ENCODE measurements at regions of chr12 and their contacts with region 1.

Region 1: GRCh38 chr12:117134059-117134458 is 34.8 kb upstream of the TESC start:
- DNase-seq: peak; percentile 81
- H3K4me3 Mint-ChIP-seq: peak overlapping the region; percentile 13
- H3K27ac Mint-ChIP-seq: peak overlapping the region; percentile 80
- H3K4me1 Mint-ChIP-seq: peaks cover 16% of the 10 kb centered on the region
- H3K27me3 Mint-ChIP-seq: no peaks in the 10 kb centered on the region

Region 2: GRCh38 chr12:116703214-116703795 is 430.8 kb before region 1 on chr12:
- CTCF ChIA-PET with region 1: interaction called, 4 read pairs
- intact Hi-C with region 1: loop called (anchors 5 kb)
- DNase-seq: peak; percentile 78
- H3K4me3 Mint-ChIP-seq: no peak overlapping the region
- H3K27ac Mint-ChIP-seq: no peak overlapping the region
- H3K4me1 Mint-ChIP-seq: peaks cover 2% of the 10 kb centered on the region
- H3K27me3 Mint-ChIP-seq: peaks cover 2% of the 10 kb centered on the region

Region 3: DNA sequence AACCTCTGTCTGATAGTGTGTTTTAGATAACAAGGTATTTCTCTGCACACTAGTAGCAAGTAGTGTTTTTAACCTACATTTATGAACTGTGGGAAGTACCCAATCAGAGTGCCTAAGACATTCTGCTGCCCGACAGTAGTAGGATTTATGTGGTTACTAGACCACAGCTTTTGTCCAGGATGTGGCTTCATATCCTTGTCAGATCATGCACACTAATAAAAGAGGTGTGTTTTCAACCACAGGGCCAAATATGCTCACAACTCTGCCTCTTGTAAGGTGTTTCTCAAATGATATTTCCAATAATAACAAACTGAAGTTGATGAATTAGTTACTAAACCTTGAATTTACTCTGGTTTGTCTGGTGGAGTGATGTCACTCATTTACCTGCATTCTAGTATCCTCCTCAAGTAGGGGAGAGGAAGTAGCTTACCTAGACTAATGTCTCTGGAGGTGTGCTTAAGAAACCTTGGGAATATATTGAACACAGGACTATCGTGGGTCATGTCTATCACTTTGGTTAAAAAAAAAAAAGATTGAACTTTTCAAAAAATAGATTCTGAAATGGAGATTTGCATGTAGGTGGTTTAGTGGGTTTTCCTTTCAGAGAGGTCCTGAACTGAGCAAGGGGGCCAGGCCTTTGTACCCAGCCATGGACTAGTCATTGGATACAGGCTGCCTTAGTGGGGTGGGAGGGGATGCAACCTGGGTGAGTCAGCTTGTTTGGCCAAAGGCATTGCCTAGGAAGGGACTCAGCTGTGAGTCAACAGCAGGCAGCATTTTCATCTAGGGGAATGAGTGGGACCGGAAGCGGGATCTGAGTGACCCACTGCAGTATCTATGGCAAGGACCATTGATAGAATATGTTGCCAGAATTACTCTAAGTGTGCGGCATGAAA is 209.3 kb before region 1 on chr12:
- CTCF ChIA-PET with region 1: no interaction called
- intact Hi-C with region 1: loop called (anchors 5 kb)
- DNase-seq: peak; percentile 70
- H3K4me3 Mint-ChIP-seq: no peak overlapping the region
- H3K27ac Mint-ChIP-seq: no peak overlapping the region
- H3K4me1 Mint-ChIP-seq: peaks cover 66% of the 10 kb centered on the region
- H3K27me3 Mint-ChIP-seq: peaks cover 3% of the 10 kb centered on the region

Region 4: DNA sequence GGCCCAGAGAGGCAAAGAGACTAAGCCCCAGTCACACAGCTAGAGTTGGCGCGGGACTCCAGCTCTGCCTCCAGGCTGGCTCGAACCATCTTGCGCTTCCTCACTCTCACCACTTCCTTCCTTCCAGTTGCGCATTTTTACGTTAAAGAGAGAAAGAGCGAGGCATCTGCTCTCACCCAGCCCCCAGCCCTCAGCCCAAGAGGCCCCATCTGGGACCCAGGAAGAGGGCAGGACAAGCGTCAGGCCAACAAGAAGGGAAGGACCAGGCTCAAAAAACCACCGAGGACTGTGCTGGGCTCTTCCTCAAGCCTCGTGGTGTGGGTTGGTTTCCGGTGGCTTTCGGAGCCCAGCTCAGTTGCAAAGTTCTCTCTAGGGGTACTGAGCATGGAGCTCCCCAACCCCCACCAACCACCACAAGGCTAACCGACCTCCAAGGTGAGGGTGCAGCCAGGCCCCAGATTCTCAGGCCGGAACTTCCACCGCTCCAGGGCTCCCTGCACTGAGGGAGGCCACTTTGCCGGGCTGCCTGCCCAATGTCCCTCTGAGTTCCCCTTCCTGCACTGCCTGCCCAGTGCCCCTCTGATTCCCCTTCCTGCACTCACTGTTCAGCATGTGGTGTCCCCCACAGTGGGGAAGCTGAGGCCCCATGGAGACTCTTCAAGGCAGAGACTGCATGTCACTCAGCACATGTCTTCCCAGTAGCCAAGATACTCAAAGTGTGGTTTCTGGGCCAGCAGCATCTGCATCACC is 70.7 kb before region 1 on chr12:
- CTCF ChIA-PET with region 1: interaction called, 8 read pairs
- intact Hi-C with region 1: loop called (anchors 1 kb)
- DNase-seq: peak; percentile 57
- H3K4me3 Mint-ChIP-seq: no peak overlapping the region
- H3K27ac Mint-ChIP-seq: peak overlapping the region; percentile 70
- H3K4me1 Mint-ChIP-seq: peaks cover 20% of the 10 kb centered on the region
- H3K27me3 Mint-ChIP-seq: no peaks in the 10 kb centered on the region

Region 5: DNA sequence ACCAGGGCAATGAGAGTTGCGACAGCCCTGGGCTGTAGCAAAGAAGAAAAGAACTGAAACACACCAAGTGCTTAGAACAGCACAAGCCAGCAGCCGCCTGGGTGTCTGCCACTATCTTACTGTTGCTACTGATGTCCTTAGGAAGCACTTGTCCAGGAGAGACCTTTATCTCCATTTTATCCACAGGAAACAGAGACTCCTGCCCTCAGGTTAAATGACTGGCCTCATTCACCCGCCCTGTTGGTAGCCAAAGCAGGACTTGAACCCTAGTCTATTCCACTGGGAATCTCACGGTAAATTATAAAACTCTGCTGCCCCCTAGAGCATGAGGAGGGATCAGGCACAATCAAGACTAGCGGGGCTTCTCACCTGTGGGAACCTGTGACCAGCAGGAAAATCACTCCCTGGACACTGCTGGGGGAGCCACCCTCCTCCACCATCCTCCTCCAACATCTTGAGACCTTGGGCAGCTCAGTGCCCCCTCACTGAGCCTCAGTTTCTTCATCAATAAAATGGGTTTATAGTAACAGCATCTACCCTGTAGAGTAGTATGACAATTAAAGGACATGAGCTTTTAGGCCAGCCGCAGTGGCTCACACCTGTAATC is 14.4 kb before region 1 on chr12:
- CTCF ChIA-PET with region 1: interaction called, 14 read pairs
- intact Hi-C with region 1: no loop called
- DNase-seq: peak; percentile 40
- H3K4me3 Mint-ChIP-seq: no peak overlapping the region
- H3K27ac Mint-ChIP-seq: no peak overlapping the region
- H3K4me1 Mint-ChIP-seq: peaks cover 5% of the 10 kb centered on the region
- H3K27me3 Mint-ChIP-seq: no peaks in the 10 kb centered on the region

Measured in activated naive CD4-positive, alpha-beta T cell treated with anti-CD3 and anti-CD28 coated beads for 36 hours (primary cell).